ENCODE measurements at regions of chr3 and their contacts with region 1.

Region 1: GRCh38 chr3:129399145-129399894 is 29.1 kb downstream of the EFCAB12 start:
- DNase-seq: peak; percentile 82
- H3K4me3 Mint-ChIP-seq: peak overlapping the region; percentile 97
- H3K27ac Mint-ChIP-seq: peak overlapping the region; percentile 99
- H3K4me1 Mint-ChIP-seq: peaks cover 31% of the 10 kb centered on the region
- H3K27me3 Mint-ChIP-seq: no peaks in the 10 kb centered on the region

Region 2: GRCh38 chr3:129428376-129429079 is 29.2 kb after region 1 on chr3 and contains the start of gene EFCAB12:
- CTCF ChIA-PET with region 1: interaction called, 5 read pairs
- POLR2A ChIA-PET with region 1: no interaction called
- intact Hi-C with region 1: loop called (anchors 1 kb)
- DNase-seq: peak; percentile 94
- H3K4me3 Mint-ChIP-seq: peak within 1 kb of the TSS; percentile 59
- H3K27ac Mint-ChIP-seq: peak within 1 kb of the TSS; percentile 72
- H3K4me1 Mint-ChIP-seq: peaks cover 38% of the 10 kb centered on the region
- H3K27me3 Mint-ChIP-seq: no peaks in the 10 kb centered on the region
- total RNA-seq, gene EFCAB12: 0.31 to 0.45 TPM

Region 3: GRCh38 chr3:129560901-129561594 is 161.7 kb after region 1 on chr3:
- CTCF ChIA-PET with region 1: no interaction called
- POLR2A ChIA-PET with region 1: no interaction called
- intact Hi-C with region 1: no loop called
- DNase-seq: no peak
- H3K4me3 Mint-ChIP-seq: no peak overlapping the region
- H3K27ac Mint-ChIP-seq: no peak overlapping the region
- H3K4me1 Mint-ChIP-seq: peaks cover 2% of the 10 kb centered on the region
- H3K27me3 Mint-ChIP-seq: no peaks in the 10 kb centered on the region

Region 4: GRCh38 chr3:129893581-129894070 is 494.3 kb after region 1 on chr3 and contains the start of gene TMCC1:
- CTCF ChIA-PET with region 1: no interaction called
- POLR2A ChIA-PET with region 1: no interaction called
- intact Hi-C with region 1: loop called (anchors 1 kb)
- DNase-seq: peak; percentile 89
- H3K4me3 Mint-ChIP-seq: peak within 1 kb of the TSS; percentile 88
- H3K27ac Mint-ChIP-seq: peak within 1 kb of the TSS; percentile 82
- H3K4me1 Mint-ChIP-seq: peaks cover 35% of the 10 kb centered on the region
- H3K27me3 Mint-ChIP-seq: no peaks in the 10 kb centered on the region
- total RNA-seq, gene TMCC1: 20.6 to 20.8 TPM